ENCODE measurements at regions of chr15 and their contacts with region 1.

Region 1: DNA sequence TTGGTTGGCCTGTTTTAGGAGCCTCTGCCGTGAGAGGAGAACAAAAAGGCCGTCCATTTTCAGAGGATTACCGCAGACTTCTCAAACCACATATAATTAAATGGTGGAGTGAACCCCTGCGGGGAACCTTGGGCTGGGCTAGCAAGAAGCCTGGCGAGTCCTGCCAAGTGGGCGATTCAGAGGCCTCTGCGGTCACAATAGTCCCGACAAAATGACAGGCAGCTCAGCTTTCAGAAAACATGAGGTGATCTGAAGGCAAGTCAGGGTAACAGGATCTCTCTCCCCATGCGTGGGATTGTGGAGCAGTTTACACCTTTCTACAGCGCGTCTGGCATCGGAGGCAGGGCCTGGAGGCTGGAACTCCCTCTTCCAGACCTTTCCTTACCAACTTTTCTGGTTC is 134.8 kb downstream of the ASB7 start:
- DNase-seq: peak; percentile 0
- H3K4me3 ChIP-seq: no peak overlapping the region
- H3K27ac ChIP-seq: no peak overlapping the region
- H3K4me1 ChIP-seq: peaks cover 7 to 13% of the 10 kb centered on the region in 2 experiments; a peak in 3 of 4 replicates
- H3K27me3 ChIP-seq: no peaks in the 10 kb centered on the region
- CTCF ChIP-seq: no peak
- EP300 ChIP-seq: no peak
- RAD21 ChIP-seq: no peak

Region 2: DNA sequence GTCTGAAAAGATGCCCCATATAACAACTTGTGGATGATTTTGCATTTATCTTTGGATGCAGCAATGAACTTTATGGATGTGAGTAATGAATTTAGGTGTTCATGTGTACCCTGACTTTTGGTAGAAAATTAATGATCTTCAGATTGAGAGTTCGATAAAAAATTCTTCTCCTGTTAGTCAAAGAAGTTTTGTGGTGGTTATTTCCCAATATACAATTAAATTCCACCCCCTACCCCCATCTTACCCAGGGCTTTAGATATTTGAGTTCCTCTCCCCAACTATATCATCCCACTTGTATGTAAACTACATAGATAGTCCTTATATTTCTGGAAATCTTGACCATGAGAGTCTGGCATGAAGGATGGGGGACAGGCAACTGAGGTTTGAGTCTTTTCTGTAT is 16.3 kb after region 1 on chr15:
- CTCF ChIA-PET with region 1: interaction called, 14 read pairs
- POLR2A ChIA-PET with region 1: no interaction called
- DNase-seq: no peak
- H3K4me3 ChIP-seq: no peak overlapping the region
- H3K27ac ChIP-seq: no peak overlapping the region
- H3K4me1 ChIP-seq: peaks cover 0 to 3% of the 10 kb centered on the region in 2 experiments; a peak in 1 of 4 replicates
- H3K27me3 ChIP-seq: no peaks in the 10 kb centered on the region
- CTCF ChIP-seq: no peak
- EP300 ChIP-seq: no peak
- RAD21 ChIP-seq: no peak

Measured in SK-N-SH (cell line).